Mammary epithelial cell (primary cell): ENCODE measurements at regions of chr6 and their contacts with region 1.

Region 1: GRCh38 chr6:11575408-11576033 is 38.0 kb downstream of the TMEM170B start:
- DNase-seq: peak; percentile 67
- H3K4me3 ChIP-seq: no peak overlapping the region
- H3K27ac ChIP-seq: no peak overlapping the region
- H3K4me1 ChIP-seq: no peaks in the 10 kb centered on the region
- H3K27me3 ChIP-seq: no peaks in the 10 kb centered on the region
- CTCF ChIP-seq: peak; percentile 98 to 99

Region 2: DNA sequence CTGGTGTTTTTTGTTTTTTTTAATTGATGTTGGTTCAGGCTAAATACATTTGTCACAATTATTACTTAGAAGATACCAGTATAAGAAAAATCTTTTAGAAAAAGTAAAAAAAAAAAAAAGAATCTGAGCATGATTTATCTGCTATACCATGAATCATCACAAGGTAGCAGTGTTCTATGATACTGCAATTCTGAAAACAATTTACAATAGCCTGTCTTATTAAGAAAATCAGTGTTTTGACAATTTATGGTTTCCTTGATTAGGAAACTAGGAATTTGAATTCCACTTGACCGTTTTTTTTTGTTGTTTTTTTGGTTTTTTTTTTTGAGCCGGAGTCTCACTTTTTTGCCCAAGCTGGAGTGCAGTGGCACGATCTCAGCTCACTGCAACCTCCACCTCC is 727.8 kb before region 1 on chr6:
- CTCF ChIA-PET with region 1: no interaction called
- dilution Hi-C with region 1: no loop called
- in situ Hi-C with region 1: no loop called
- intact Hi-C with region 1: loop called (anchors 5 kb)
- DNase-seq: no peak
- H3K4me3 ChIP-seq: no peak overlapping the region
- H3K27ac ChIP-seq: no peak overlapping the region
- H3K4me1 ChIP-seq: no peaks in the 10 kb centered on the region
- H3K27me3 ChIP-seq: no peaks in the 10 kb centered on the region
- CTCF ChIP-seq: peak; percentile 30

Region 3: GRCh38 chr6:11064836-11065235 is 510.7 kb before region 1 on chr6:
- CTCF ChIA-PET with region 1: no interaction called
- dilution Hi-C with region 1: no loop called
- in situ Hi-C with region 1: no loop called
- intact Hi-C with region 1: loop called (anchors 5 kb)
- DNase-seq: no peak
- H3K4me3 ChIP-seq: no peak overlapping the region
- H3K27ac ChIP-seq: no peak overlapping the region
- H3K4me1 ChIP-seq: no peaks in the 10 kb centered on the region
- H3K27me3 ChIP-seq: no peaks in the 10 kb centered on the region
- CTCF ChIP-seq: no peak

Region 4: DNA sequence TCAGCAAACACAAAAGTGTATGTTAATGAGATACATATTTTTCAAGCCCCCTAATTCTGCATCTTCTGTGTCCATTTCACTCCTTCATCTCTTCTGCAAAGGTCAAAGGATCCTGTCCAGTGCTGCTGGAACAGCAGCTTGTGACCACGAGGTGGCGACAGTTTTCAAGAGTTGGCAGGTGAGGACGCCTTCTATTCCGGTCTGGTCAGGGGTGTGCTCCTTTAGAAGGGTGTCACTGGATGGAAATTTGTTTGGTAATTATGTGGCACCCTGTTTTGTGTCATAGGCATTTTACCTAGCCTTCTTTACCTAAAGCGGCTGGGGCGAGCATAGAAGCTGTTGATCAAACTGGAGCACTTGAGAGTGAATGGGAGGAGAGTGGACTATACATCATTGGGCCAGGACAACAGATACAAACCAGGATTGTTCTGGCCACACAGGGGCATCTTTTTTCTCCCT is 431.1 kb before region 1 on chr6:
- CTCF ChIA-PET with region 1: no interaction called
- dilution Hi-C with region 1: no loop called
- in situ Hi-C with region 1: no loop called
- intact Hi-C with region 1: loop called (anchors 1 kb)
- DNase-seq: peak; percentile 70
- H3K4me3 ChIP-seq: no peak overlapping the region
- H3K27ac ChIP-seq: peak overlapping the region; percentile 79
- H3K4me1 ChIP-seq: peaks cover 46% of the 10 kb centered on the region
- H3K27me3 ChIP-seq: no peaks in the 10 kb centered on the region
- CTCF ChIP-seq: peak; percentile 94 to 96

Region 5: DNA sequence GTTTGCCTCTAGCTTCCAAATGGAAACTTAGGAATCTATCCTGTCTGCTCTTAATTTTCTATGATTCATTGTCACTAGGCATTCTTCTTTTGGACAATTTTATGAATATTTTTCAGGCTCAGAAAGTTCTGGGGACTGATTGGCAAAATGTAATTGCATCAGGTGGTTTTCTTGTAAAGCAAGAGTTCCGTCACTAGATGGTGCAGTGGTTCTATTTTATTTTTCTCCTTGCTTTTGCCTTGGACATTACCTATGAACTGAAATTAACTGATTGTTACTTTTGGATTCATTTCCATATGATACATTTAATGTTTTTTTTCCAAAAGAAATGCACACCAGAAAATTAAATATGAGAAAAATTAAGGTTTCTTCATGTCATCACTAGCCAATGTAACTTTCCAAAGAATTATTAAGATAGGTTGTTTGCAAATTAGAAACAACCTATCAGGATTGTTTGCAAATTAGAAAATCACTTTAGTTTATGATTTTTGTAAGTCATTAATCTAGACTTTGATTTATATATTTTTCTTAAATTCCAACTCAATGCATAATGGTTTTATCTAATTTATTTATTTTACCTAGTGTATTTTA is 10.0 kb after region 1 on chr6:
- CTCF ChIA-PET with region 1: interaction called, 10 read pairs
- dilution Hi-C with region 1: no loop called
- in situ Hi-C with region 1: no loop called
- intact Hi-C with region 1: no loop called
- DNase-seq: peak; percentile 31
- H3K4me3 ChIP-seq: no peak overlapping the region
- H3K27ac ChIP-seq: no peak overlapping the region
- H3K4me1 ChIP-seq: no peaks in the 10 kb centered on the region
- H3K27me3 ChIP-seq: peaks cover 3% of the 10 kb centered on the region
- CTCF ChIP-seq: peak; percentile 64 to 66

Region 6: GRCh38 chr6:11810039-11810541 is 234.6 kb after region 1 on chr6:
- CTCF ChIA-PET with region 1: no interaction called
- dilution Hi-C with region 1: no loop called
- in situ Hi-C with region 1: no loop called
- intact Hi-C with region 1: no loop called
- DNase-seq: peak; percentile 90
- H3K4me3 ChIP-seq: no peak overlapping the region
- H3K27ac ChIP-seq: peak overlapping the region; percentile 46
- H3K4me1 ChIP-seq: peaks cover 56% of the 10 kb centered on the region
- H3K27me3 ChIP-seq: no peaks in the 10 kb centered on the region
- CTCF ChIP-seq: no peak